Spleen (tissue), 13 donors: ENCODE measurements at regions of chr1 and their contacts with region 1.

Region 1: DNA sequence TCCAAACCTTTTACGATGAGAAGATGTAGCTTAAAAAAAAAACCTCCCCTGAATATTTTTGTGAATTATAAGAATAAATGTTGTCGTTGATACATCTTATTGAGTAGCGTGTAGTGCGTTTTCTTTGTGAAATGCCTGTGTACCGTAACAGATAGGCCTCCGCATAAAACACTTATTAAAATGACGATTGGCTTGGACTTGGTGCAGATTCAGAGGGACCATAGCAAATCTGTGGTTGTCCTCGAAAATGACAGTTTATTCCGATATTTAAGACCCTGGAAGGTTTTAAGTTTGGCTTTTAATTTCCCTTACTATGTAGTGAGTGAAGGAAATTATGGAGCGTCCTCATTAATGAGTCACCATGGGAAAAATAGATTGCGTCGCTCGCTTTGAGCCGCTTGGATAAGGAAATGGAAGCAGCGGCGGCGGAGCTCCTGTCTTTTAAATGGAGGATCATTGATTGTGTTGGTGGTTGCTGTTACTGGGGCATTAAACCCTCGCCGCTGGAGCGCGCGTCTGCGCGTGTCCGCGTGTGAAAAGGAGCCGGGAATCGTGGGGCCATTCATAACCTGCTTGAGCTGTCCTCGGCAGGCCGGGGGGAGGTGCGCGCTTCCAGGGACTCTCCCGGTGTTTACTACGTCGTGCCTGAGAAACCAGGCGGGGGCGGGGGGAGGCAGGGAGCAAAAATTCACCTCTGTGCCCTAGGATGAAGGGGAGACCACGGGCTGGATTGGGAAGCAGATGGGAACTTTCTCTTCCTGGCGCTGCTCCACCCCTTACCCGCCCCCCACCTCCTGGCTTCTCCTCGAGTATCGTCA is 1.7 kb downstream of the SPEN start:
- DNase-seq: peak; percentile 92
- H3K4me3 ChIP-seq: peak overlapping the region; percentile 68 to 92 (median 76)
- H3K27ac ChIP-seq: peak overlapping the region; percentile 90 to 99 (median 98)
- H3K4me1 ChIP-seq: peaks cover 47 to 85% (median 71%) of the 10 kb centered on the region in 6 donors
- H3K27me3 ChIP-seq: no peaks in the 10 kb centered on the region
- CTCF ChIP-seq: peak in 1 of 11 experiments; percentile 5
- POLR2A ChIP-seq: peak in 1 of 3 donors; percentile 73

Region 2: DNA sequence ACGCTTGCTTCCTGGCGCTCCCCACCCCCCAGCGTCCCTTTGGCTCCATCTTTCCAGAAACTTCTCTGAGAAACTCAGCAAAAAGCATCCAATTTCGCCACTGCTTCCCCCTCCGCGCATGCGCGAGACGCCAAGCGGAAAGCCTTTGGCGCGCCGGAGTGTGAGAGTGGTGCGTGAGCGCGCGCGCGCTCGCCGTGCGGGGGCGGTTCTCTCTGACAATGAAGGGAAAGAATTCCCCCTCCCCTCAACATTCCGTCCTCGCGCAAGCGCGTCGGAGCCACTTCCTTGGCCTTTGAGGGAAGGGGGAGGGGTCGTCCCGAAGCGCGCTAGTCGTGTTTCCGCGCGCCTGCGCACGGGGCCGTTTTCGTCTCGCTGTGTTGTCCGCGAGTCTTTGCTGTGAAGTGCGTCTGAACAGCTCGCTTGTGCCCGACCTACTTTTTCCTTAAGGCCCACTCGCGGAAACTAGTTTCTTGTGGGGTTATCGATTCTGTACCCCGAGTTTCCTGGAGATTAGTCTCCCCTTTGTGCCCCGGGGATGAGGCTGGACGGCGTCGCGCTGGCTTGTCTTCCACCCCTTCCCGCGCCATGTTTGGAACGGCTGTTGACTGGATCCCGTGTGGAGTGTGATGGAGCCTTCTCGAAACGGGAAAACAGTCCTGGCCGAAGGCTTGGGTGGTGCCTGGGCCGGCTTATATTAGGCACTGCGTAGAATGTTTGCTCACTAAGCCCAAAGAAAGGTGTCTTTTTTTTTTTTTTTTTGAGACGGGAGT is 13.2 kb before region 1 on chr1:
- intact Hi-C with region 1: loop called (anchors 2 kb)
- DNase-seq: peak; percentile 99
- H3K4me3 ChIP-seq: peak overlapping the region; percentile 66 to 94 (median 76)
- H3K27ac ChIP-seq: peak overlapping the region; percentile 99 to 100 (median 100)
- H3K4me1 ChIP-seq: peaks cover 5 to 53% (median 47%) of the 10 kb centered on the region in 6 donors
- H3K27me3 ChIP-seq: no peaks in the 10 kb centered on the region
- CTCF ChIP-seq: peak in 3 of 11 experiments; percentile 18 to 28 (median 25)
- POLR2A ChIP-seq: peak in 2 of 3 donors; percentile 55 to 84

Region 3: DNA sequence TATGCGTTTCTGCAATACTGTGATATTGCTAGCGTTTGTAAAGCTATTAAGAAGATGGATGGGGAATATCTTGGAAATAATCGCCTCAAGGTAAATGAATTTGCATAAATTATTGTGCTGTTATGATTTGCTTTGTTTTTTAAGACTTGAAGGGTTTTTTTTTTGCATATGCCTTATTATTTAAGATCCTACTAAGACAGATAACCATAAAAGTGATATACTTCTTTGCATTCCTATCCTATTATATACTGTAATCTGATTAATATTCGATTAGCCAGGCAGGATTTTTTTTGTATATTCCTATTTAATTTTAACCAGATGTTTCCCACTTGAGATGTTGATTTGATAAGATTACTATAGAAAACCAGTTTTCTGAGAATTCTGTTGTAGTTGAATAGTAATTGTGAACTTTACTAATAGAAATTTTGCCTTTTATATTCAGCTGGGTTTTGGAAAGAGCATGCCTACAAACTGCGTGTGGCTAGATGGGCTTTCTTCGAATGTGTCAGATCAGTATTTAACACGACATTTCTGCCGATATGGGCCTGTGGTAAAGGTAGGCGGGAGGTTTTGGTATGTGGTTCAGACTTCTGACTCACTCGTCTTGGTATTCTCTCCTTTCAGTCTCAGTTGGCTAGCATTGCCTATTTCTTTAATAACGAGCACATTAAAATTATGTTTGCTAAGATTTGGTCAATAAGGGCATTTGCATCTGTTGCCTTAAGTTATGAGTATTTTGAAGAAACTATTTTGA is 70.0 kb after region 1 on chr1:
- intact Hi-C with region 1: loop called (anchors 10 kb)
- DNase-seq: no peak
- H3K4me3 ChIP-seq: no peak overlapping the region
- H3K27ac ChIP-seq: no peak overlapping the region
- H3K4me1 ChIP-seq: peaks cover 13 to 50% (median 31%) of the 10 kb centered on the region in 6 donors
- H3K27me3 ChIP-seq: no peaks in the 10 kb centered on the region
- CTCF ChIP-seq: no peak
- POLR2A ChIP-seq: no peak

Region 4: DNA sequence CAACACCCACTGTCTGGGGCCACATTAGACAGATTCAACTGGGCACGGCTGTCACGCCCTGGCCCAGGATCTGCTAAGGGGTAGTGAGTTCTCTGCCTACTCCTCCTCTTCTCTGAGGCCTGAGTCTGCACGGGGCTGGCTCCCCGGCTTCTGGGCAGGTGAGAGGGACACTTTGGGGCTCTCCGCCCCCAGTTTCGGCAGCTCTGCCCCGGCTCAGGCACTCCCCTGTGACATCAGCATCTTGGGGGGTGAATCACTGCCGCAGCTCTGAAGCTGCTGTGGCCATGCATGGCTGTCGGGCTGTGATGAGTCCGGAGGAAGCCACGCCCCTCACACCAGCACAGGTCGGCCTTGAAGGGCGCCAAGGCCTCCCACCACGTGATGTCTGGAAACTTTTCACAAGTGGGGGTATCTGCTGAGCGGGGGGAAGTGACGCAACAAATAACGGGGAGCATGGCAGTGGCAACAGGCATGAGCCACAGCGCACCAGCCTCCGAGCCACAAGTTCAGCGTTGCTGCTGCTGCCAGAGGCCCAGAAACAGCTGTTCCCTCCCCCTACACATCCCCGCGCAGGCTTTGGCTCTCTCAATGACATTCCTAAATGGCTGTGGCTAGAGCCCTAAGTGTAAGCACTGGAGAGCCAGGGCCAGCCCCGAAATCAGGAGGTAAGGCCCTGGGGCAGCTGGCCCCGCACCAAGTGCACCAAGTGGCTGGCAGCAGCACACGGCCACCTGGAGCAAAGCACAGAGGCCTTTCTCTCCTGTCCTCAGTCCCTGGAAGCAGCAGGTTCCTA is 100.5 kb after region 1 on chr1:
- intact Hi-C with region 1: no loop called
- DNase-seq: peak; percentile 94
- H3K4me3 ChIP-seq: peak overlapping the region in 3 of 8 donors; percentile 13 to 49 (median 22)
- H3K27ac ChIP-seq: peak overlapping the region; percentile 64 to 91 (median 85)
- H3K4me1 ChIP-seq: peaks cover 56 to 86% (median 74%) of the 10 kb centered on the region in 6 donors
- H3K27me3 ChIP-seq: no peaks in the 10 kb centered on the region
- CTCF ChIP-seq: no peak
- POLR2A ChIP-seq: peak in 1 of 3 donors; percentile 23